H1 (cell line): ENCODE measurements at regions of chr13 and their contacts with region 1.

Region 1: GRCh38 chr13:99516153-99516929 is 15.1 kb downstream of the TM9SF2 start:
- DNase-seq: no peak
- H3K4me3 ChIP-seq: no peak overlapping the region
- H3K27ac ChIP-seq: no peak overlapping the region
- H3K4me1 ChIP-seq: no peaks in the 10 kb centered on the region
- H3K27me3 ChIP-seq: no peaks in the 10 kb centered on the region
- CTCF ChIP-seq: no peak
- EP300 ChIP-seq: no peak
- POLR2A ChIP-seq: no peak
- RAD21 ChIP-seq: no peak

Region 2: DNA sequence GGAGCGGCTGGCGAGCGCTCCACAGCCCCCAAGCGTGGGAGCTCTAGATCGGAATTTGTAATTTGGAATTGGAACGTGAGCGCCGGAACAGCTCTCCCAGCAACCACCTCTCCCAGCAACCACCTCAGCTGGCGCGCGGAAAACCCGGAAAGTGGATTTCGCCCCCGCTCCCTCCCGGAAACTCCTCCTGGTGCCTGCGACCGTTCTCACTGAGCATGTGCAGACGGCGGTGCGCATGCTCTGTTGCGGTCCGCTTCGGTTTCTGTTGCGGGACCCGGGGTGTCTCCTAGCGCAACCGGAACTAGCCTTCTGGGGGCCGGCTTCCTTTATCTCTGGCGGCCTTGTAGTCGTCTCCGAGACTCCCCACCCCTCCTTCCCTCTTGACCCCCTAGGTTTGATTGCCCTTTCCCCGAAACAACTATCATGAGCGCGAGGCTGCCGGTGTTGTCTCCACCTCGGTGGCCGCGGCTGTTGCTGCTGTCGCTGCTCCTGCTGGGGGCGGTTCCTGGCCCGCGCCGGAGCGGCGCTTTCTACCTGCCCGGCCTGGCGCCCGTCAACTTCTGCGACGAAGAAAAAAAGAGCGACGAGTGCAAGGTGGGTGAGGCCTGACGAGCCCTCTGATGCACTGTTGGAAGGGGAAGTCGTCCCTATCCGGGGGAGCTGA is 15.0 kb before region 1 on chr13 and contains the start of gene TM9SF2:
- CTCF ChIA-PET with region 1: interaction called, 17 read pairs
- POLR2A ChIA-PET with region 1: interaction called, 9 read pairs
- DNase-seq: peak; percentile 93 to 100
- H3K4me3 ChIP-seq: peak within 1 kb of the TSS; percentile 87 to 98 (median 95)
- H3K27ac ChIP-seq: peak within 1 kb of the TSS; percentile 77
- H3K4me1 ChIP-seq: peaks cover 0 to 5% (median 0%) of the 10 kb centered on the region in 4 experiments; a peak in 4 of 7 replicates
- H3K27me3 ChIP-seq: no peaks in the 10 kb centered on the region
- CTCF ChIP-seq: no peak
- EP300 ChIP-seq: no peak
- POLR2A ChIP-seq: peak; percentile 59 to 63; a peak in 2 of 3 replicates
- RAD21 ChIP-seq: no peak
- total RNA-seq, gene TM9SF2: 93.3 and 101 TPM in 2 replicates